Activated B cell treated with CpG ODN at 0.5 μM for 24 hours (primary cell): ENCODE measurements at regions of chr10 and their contacts with region 1.

Region 1: GRCh38 chr10:32055813-32056600 is at the start of gene KIF5B:
- DNase-seq: peak; percentile 90
- ATAC-seq: peak; percentile 86
- H3K4me3 Mint-ChIP-seq: peak within 1 kb of the TSS; percentile 96
- H3K27ac Mint-ChIP-seq: peak within 1 kb of the TSS; percentile 90
- H3K4me1 Mint-ChIP-seq: peaks cover 56% of the 10 kb centered on the region
- H3K27me3 Mint-ChIP-seq: no peaks in the 10 kb centered on the region
- CTCF ChIP-seq: no peak
- total RNA-seq, gene KIF5B: 44.2 and 45.0 TPM in 2 replicates

Region 2: GRCh38 chr10:30348378-30348776 is 1707.6 kb before region 1 on chr10:
- CTCF ChIA-PET with region 1: no interaction called
- POLR2A ChIA-PET with region 1: no interaction called
- intact Hi-C with region 1: loop called (anchors 10 kb)
- DNase-seq: no peak
- ATAC-seq: no peak
- H3K4me3 Mint-ChIP-seq: peak overlapping the region; percentile 99
- H3K27ac Mint-ChIP-seq: peak overlapping the region; percentile 95
- H3K4me1 Mint-ChIP-seq: peaks cover 46% of the 10 kb centered on the region
- H3K27me3 Mint-ChIP-seq: no peaks in the 10 kb centered on the region
- CTCF ChIP-seq: no peak

Region 3: DNA sequence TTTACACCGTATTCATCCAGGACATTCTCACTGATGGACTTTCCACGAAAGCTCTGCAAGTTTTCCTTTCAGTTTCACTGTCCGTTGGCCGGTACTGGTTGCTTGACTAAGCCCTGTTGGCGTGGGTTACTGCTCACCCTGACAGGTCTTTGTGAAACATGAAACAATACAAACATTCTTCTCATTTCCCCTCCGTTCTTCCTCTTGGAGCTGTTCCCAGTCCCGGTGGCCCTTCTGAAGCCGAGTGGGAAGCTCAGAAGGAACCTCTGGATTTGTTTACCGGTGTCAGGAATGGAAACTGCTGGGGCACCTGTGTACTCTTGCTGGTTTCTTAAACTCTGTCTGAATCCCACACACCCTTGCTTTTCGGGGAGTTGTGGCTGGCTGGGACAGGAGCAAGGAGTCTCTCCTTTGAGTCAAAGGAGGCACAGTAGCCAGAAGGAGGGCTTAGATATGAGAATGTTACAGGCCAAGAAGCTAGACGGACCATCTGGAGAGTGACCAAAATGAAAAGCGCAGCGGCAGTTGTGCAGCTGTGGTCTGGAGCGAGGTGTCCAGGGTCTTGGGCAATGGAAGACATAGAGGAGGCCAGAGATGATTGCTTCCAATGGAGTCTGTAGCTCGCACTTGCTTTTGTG is 1472.1 kb before region 1 on chr10:
- CTCF ChIA-PET with region 1: no interaction called
- POLR2A ChIA-PET with region 1: no interaction called
- intact Hi-C with region 1: no loop called
- DNase-seq: no peak
- ATAC-seq: no peak
- H3K4me3 Mint-ChIP-seq: peak overlapping the region; percentile 67
- H3K27ac Mint-ChIP-seq: peak overlapping the region; percentile 31
- H3K4me1 Mint-ChIP-seq: peaks cover 49% of the 10 kb centered on the region
- H3K27me3 Mint-ChIP-seq: no peaks in the 10 kb centered on the region
- CTCF ChIP-seq: no peak

Region 4: DNA sequence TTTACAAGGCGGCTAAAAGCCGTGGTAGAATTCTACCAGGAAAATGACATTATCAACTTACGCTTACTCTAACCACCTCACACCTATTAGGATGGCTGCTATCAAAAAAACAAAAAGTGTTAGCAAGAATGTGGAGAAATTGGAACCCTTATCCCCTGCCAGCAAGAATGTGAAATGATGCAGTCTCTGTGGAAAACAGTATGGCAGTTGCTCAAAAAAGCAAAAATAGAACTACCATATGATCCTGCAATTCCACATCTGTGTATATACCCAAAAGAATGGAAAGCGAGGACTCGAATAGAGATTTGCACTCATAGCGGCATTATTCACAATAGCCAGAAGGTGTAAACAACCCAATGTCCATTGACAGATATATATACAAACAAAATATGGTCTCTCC is 61.1 kb before region 1 on chr10:
- CTCF ChIA-PET with region 1: no interaction called
- POLR2A ChIA-PET with region 1: no interaction called
- intact Hi-C with region 1: no loop called
- DNase-seq: no peak
- ATAC-seq: no peak
- H3K4me3 Mint-ChIP-seq: no peak overlapping the region
- H3K27ac Mint-ChIP-seq: no peak overlapping the region
- H3K4me1 Mint-ChIP-seq: no peaks in the 10 kb centered on the region
- H3K27me3 Mint-ChIP-seq: no peaks in the 10 kb centered on the region
- CTCF ChIP-seq: no peak

Region 5: DNA sequence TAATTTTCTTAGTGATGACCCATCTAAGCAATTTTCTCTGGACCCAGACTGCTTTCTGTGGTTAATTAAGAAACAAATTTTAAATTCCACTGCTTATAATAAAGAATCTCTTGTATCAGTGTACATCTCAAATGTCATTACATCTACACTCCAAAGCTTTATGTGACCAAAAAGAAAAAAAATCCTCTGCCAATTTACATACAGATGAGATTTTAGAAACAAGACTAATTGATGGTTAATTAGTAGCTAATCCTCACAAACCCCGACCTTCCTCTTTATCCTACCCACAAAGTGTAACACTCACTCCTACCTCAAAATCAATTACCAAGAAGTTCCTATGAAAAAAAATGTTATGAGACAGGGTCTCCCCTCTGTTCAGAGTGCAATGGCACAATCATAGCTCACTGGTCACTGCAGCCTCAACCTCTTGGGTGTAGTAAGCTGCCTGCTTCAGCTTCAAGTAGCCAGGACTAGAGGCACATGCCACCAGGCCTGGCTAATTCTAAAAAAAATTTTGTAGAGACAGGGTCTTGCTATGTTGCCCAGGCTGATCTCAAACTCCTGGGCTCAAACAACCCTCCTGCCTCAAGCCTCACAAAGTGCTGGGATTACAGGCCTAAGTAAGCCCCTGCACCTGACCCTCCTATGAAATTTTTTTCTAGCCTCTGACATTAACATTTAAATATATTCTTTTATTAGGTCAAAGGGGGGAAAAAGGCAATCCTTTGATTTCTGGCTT is 14.5 kb before region 1 on chr10:
- CTCF ChIA-PET with region 1: no interaction called
- POLR2A ChIA-PET with region 1: interaction called, 3 read pairs
- intact Hi-C with region 1: loop called (anchors 1 kb)
- DNase-seq: no peak
- ATAC-seq: no peak
- H3K4me3 Mint-ChIP-seq: no peak overlapping the region
- H3K27ac Mint-ChIP-seq: no peak overlapping the region
- H3K4me1 Mint-ChIP-seq: peaks cover 30% of the 10 kb centered on the region
- H3K27me3 Mint-ChIP-seq: no peaks in the 10 kb centered on the region
- CTCF ChIP-seq: no peak

Region 6: DNA sequence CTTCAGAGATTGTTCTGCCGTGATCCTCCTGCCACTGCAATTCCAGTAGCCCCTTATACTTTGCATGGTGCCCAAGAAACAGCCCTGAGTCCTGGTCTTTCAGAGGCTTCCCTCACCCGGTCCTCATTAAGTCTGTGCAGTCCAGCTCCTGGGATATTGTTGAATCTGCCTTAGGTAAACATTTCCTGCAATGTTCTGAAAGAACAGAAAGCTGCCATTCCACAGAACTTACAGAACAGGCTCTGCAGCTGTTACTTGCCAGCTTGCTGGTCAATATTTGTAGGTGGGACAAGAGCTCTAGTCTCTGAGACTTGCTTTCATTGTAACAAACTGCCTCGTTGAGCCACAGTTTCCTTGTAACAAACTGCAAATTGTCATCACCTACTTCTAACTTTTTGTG is 115.2 kb after region 1 on chr10:
- CTCF ChIA-PET with region 1: no interaction called
- POLR2A ChIA-PET with region 1: no interaction called
- intact Hi-C with region 1: no loop called
- DNase-seq: no peak
- ATAC-seq: no peak
- H3K4me3 Mint-ChIP-seq: no peak overlapping the region
- H3K27ac Mint-ChIP-seq: no peak overlapping the region
- H3K4me1 Mint-ChIP-seq: no peaks in the 10 kb centered on the region
- H3K27me3 Mint-ChIP-seq: peaks cover 4% of the 10 kb centered on the region
- CTCF ChIP-seq: no peak

Region 7: GRCh38 chr10:32190890-32191491 is 135.0 kb after region 1 on chr10:
- CTCF ChIA-PET with region 1: no interaction called
- POLR2A ChIA-PET with region 1: interaction called, 3 read pairs
- intact Hi-C with region 1: loop called (anchors 10 kb)
- DNase-seq: no peak
- ATAC-seq: peak; percentile 75
- H3K4me3 Mint-ChIP-seq: no peak overlapping the region
- H3K27ac Mint-ChIP-seq: peak overlapping the region; percentile 75
- H3K4me1 Mint-ChIP-seq: peaks cover 4% of the 10 kb centered on the region
- H3K27me3 Mint-ChIP-seq: peaks cover 6% of the 10 kb centered on the region
- CTCF ChIP-seq: no peak

Region 8: DNA sequence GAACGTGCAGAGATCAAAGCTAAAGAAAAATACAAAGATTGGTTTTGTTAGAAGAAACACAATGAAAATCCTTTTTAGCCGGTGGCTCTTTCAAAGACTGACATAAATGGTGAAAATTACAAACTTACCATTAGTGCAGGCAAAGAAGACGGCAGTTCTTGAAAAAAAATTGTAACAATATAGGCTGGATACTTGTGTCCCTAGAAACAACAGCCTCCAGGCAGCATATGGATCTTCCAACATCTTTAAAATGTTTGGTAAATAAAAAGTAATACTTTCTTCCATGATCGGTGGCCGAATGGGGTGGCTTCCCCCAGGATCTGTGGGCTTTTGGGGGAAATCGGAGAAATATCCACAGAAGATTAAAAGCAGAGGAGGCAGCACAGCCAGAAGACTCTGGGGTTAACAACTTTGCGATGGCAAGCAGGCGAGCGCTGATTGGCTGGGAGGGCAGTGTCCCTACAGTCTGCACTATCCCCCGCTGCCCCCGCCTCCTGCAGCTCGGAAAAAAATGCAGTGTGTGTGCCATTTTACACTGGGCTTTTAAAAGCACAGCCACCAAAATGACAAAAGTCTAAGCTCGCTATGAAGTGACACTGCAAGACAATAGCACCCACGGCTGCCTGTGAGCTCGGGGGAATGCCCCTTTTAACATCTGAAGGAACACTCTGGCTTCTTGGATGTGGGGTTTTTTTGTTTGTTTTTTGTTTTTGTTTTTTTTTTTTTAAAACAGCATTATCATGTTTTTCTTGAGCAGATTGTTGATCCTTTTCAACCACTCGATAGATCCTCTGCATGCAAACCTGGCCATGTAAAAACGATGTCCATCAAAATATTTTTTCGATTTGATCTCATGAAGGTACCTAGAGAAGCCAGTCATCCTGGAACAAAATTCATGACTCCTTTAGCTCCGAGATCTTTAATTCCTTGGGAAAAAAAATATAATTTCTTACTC is 322.6 kb after region 1 on chr10:
- CTCF ChIA-PET with region 1: no interaction called
- POLR2A ChIA-PET with region 1: interaction called, 5 read pairs
- intact Hi-C with region 1: loop called (anchors 2 kb)
- DNase-seq: peak; percentile 73
- ATAC-seq: peak; percentile 94
- H3K4me3 Mint-ChIP-seq: no peak overlapping the region
- H3K27ac Mint-ChIP-seq: no peak overlapping the region
- H3K4me1 Mint-ChIP-seq: peaks cover 21% of the 10 kb centered on the region
- H3K27me3 Mint-ChIP-seq: no peaks in the 10 kb centered on the region
- CTCF ChIP-seq: no peak

Region 9: GRCh38 chr10:32445740-32446535 is 389.9 kb after region 1 on chr10 and contains the start of gene CCDC7:
- CTCF ChIA-PET with region 1: no interaction called
- POLR2A ChIA-PET with region 1: no interaction called
- intact Hi-C with region 1: loop called (anchors 2 kb)
- DNase-seq: peak; percentile 83
- ATAC-seq: peak; percentile 98
- H3K4me3 Mint-ChIP-seq: peak within 1 kb of the TSS; percentile 98
- H3K27ac Mint-ChIP-seq: peak within 1 kb of the TSS; percentile 99
- H3K4me1 Mint-ChIP-seq: peaks cover 15% of the 10 kb centered on the region
- H3K27me3 Mint-ChIP-seq: peaks cover 6% of the 10 kb centered on the region
- CTCF ChIP-seq: no peak
- total RNA-seq, gene CCDC7: 16.8 and 20.0 TPM in 2 replicates

Region 10: GRCh38 chr10:33095867-33096815 is 1040.1 kb after region 1 on chr10:
- CTCF ChIA-PET with region 1: no interaction called
- POLR2A ChIA-PET with region 1: interaction called, 3 read pairs
- intact Hi-C with region 1: loop called (anchors 10 kb)
- DNase-seq: no peak
- ATAC-seq: peak; percentile 66
- H3K4me3 Mint-ChIP-seq: peak overlapping the region; percentile 36
- H3K27ac Mint-ChIP-seq: peak overlapping the region; percentile 72
- H3K4me1 Mint-ChIP-seq: peaks cover 74% of the 10 kb centered on the region
- H3K27me3 Mint-ChIP-seq: no peaks in the 10 kb centered on the region
- CTCF ChIP-seq: no peak

Region 11: DNA sequence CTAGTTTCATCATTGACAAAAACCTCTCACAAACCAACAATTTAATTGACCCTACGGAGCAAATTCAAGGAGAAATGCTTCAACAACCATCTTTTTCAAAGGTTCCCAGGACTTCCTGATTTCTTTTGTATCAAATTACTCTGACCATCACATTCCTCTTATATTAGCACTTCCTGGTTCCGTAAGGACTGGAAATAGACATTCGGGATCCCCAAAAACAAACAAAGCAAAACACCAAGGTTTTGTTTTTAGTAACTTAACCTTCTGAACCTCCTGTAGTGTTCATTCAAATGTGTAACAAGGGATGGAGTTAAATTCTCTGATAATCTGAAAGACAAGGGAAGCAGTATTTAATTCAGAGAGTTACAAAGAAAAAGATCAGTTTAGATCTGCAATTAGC is 1666.1 kb after region 1 on chr10:
- CTCF ChIA-PET with region 1: no interaction called
- POLR2A ChIA-PET with region 1: no interaction called
- intact Hi-C with region 1: no loop called
- DNase-seq: no peak
- ATAC-seq: no peak
- H3K4me3 Mint-ChIP-seq: no peak overlapping the region
- H3K27ac Mint-ChIP-seq: no peak overlapping the region
- H3K4me1 Mint-ChIP-seq: no peaks in the 10 kb centered on the region
- H3K27me3 Mint-ChIP-seq: no peaks in the 10 kb centered on the region
- CTCF ChIP-seq: no peak